ENCODE measurements at regions of chr16 and their contacts with region 1.

Region 1: DNA sequence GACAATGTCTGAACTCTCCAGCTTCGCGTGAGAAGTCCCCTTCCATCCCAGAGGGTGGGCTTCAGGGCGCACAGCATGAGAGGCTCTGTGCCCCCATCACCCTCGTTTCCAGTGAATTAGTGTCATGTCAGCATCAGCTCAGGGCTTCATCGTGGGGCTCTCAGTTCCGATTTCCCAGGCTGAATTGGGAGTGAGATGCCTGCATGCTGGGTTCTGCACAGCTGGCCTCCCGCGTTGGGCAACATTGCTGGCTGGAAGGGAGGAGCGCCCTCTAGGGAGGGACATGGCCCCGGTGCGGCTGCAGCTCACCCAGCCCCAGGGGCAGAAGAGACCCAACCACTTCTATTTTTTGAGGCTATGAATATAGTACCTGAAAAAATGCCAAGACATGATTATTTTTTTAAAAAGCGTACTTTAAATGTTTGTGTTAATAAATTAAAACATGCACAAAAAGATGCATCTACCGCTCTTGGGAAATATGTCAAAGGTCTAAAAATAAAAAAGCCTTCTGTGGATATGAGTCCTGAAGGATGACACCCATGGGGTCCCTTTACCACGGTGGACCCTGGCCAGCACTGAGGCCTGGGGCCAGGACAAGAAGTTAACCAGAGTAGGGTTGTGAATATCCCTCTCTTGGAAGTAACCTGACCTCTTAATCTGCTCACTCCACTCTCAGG is 10.5 kb upstream of the ITGAD start:
- DNase-seq: peak in 1 of 2 experiments; percentile 77
- H3K4me3 ChIP-seq: no peak overlapping the region
- H3K27ac ChIP-seq: no peak overlapping the region
- H3K4me1 ChIP-seq: peaks cover 29% of the 10 kb centered on the region
- H3K27me3 ChIP-seq: no peaks in the 10 kb centered on the region
- CTCF ChIP-seq: peak; percentile 86

Region 2: GRCh38 chr16:30997000-30997886 is 385.4 kb before region 1 on chr16:
- CTCF ChIA-PET with region 1: no interaction called
- POLR2A ChIA-PET with region 1: interaction called, 29 read pairs
- intact Hi-C with region 1: no loop called
- DNase-seq: peak; percentile 50 to 84
- H3K4me3 ChIP-seq: peak overlapping the region; percentile 67
- H3K27ac ChIP-seq: peak overlapping the region; percentile 80
- H3K4me1 ChIP-seq: peaks cover 24% of the 10 kb centered on the region
- H3K27me3 ChIP-seq: no peaks in the 10 kb centered on the region
- CTCF ChIP-seq: no peak

Region 3: GRCh38 chr16:31108035-31108793 is 274.4 kb before region 1 on chr16 and contains the start of gene BCKDK:
- CTCF ChIA-PET with region 1: interaction called, 15 read pairs
- POLR2A ChIA-PET with region 1: no interaction called
- intact Hi-C with region 1: no loop called
- DNase-seq: peak in 1 of 2 experiments; percentile 68
- H3K4me3 ChIP-seq: peak within 1 kb of the TSS; percentile 99
- H3K27ac ChIP-seq: peak within 1 kb of the TSS; percentile 20; the same call in 1 of the 2 replicates
- H3K4me1 ChIP-seq: peaks cover 15% of the 10 kb centered on the region
- H3K27me3 ChIP-seq: no peaks in the 10 kb centered on the region
- CTCF ChIP-seq: no peak
- total RNA-seq, gene BCKDK: 41.5 and 66.5 TPM in 2 replicates

Region 4: DNA sequence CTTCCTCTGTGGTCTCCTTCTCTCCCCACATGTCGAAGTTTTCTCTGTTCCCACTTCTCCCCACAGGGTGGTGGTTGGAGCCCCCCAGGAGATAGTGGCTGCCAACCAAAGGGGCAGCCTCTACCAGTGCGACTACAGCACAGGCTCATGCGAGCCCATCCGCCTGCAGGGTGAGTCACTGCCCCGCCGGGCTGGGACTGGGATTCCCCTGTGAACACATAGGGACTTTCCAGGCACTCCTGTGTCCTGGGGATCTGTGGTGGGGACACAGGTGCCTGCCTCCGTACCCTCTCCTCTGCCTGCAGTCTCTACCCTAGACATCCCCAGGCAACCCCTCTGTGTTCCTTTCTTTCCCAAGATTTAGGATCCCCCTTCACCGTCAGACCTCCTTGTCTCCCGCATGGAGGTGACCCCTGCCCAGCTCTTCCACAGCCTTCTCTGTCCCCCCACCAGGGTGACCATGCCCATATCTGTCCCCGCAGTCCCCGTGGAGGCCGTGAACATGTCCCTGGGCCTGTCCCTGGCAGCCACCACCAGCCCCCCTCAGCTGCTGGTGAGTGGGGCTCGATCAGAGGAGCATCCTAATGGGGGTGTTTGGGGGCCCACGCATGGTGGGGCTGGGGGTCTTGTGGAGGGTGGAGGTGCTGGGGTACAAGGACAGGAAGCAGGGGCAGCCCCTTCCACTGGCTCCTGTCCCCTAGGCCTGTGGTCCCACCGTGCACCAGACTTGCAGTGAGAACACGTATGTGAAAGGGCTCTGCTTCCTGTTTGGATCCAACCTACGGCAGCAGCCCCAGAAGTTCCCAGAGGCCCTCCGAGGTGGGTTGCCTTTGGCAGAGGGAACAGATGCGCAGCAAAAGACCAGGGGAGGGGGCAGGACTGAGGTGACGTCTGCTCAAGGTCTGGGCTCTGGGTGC is 117.0 kb before region 1 on chr16:
- CTCF ChIA-PET with region 1: no interaction called
- POLR2A ChIA-PET with region 1: no interaction called
- intact Hi-C with region 1: loop called (anchors 5 kb)
- DNase-seq: peak; percentile 66 to 74
- H3K4me3 ChIP-seq: no peak overlapping the region; the same call in 1 of the 2 replicates
- H3K27ac ChIP-seq: peak overlapping the region; percentile 58
- H3K4me1 ChIP-seq: peaks cover 27% of the 10 kb centered on the region
- H3K27me3 ChIP-seq: no peaks in the 10 kb centered on the region
- CTCF ChIP-seq: no peak

Region 5: GRCh38 chr16:31451681-31452351 is 69.2 kb after region 1 on chr16:
- CTCF ChIA-PET with region 1: interaction called, 16 read pairs
- POLR2A ChIA-PET with region 1: interaction called, 23 read pairs
- intact Hi-C with region 1: loop called (anchors 5 kb)
- DNase-seq: peak; percentile 44 to 57
- H3K4me3 ChIP-seq: no peak overlapping the region
- H3K27ac ChIP-seq: peak overlapping the region; percentile 75; the same call in 1 of the 2 replicates
- H3K4me1 ChIP-seq: peaks cover 49% of the 10 kb centered on the region
- H3K27me3 ChIP-seq: no peaks in the 10 kb centered on the region
- CTCF ChIP-seq: peak; percentile 66; the same call in 1 of the 2 replicates